Activated naive CD4-positive, alpha-beta T cell treated with anti-CD3 and anti-CD28 coated beads, Interleukin-2, amount 10 ng/mL, durations not matched to agents 7 days and 5 days (primary cell): ENCODE measurements at regions of chr3 and their contacts with region 1.

Region 1: GRCh38 chr3:129016356-129016719 is 15.2 kb downstream of the EFCC1 start:
- DNase-seq: peak; percentile 77
- H3K4me3 Mint-ChIP-seq: peak overlapping the region; percentile 64
- H3K27ac Mint-ChIP-seq: peak overlapping the region; percentile 93
- H3K4me1 Mint-ChIP-seq: peaks cover 47% of the 10 kb centered on the region
- H3K27me3 Mint-ChIP-seq: peaks cover 3% of the 10 kb centered on the region

Region 2: DNA sequence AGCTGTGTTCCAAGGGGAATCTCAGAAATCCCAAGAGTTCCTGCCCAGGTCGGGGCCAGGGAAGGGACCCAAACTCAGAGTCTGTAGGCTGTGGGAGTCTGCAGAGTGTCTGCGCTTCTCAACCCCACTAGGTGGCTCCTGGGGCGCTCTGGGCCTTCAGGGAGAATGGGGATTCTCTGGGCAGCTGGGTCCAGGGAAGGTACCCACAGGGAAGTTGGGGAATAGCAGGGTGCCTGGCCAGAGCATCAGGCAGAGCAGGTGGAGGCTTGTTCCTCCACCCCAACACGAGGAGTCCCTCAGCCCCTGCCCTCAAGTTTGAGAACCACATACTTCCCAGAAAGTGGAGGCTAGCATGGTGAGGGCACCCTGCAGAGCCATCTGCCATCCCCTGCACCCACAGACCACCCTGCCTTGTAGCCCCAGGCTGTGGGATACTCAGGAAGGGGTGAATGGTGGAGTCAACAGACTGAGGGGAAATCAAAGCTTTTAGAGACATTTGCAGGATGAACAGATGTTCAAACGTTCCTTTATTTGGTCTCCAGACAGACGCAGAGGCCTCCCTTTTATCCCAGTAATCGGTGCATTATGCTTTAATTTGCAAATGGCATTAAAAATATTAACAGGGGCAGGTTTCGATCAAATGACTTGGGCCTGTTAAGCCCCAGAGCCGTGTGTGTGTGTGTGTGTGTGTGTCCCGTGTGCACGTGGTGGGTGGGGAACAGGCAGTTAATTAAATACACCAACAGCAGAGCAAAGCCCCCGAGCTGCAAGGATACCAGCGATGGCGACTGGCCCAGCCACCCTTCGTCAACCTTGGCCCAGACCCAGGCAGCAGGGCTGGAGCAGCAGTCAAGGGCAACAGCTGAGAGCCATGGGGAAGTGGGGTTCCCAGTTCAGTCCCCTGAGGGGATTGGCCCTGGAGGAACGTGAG is 607.4 kb before region 1 on chr3:
- CTCF ChIA-PET with region 1: no interaction called
- DNase-seq: no peak
- H3K4me3 Mint-ChIP-seq: no peak overlapping the region
- H3K27ac Mint-ChIP-seq: no peak overlapping the region
- H3K4me1 Mint-ChIP-seq: no peaks in the 10 kb centered on the region
- H3K27me3 Mint-ChIP-seq: no peaks in the 10 kb centered on the region

Region 3: DNA sequence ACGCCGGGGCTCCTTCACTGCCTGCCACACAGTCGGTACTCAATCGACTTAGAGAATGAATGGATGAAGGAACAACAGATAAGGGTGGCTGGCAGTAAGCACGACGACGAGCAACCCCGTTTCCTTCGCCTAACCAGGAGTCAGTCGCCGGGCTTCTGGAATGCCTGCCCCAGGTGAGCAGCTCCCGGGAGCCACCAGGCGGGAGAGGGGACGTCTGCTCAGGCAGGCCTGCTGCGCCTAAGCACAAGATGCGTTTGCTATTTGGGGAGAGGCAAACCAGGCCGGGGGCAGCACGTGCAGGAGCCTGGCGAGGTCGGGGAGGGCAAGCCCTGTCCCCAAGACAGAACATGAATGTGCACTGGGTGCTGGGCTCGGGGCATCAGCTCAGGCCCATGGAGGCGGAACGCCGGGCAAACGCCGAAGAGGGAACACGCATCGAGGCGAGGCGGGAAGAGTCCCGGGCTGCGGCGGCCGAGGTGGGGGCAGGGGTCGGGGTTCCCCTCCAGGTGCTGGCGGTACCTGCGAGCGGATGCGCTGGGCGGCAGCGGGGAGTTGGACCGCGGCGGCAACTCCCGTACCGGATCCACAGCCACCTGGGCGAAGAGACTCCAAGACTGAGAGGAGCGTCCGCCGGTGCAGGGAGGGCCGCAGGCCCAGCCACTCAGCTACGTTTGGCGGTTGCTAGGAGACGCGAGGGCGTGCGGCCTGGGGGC is 22.7 kb before region 1 on chr3 and contains the start of gene CFAP92:
- CTCF ChIA-PET with region 1: interaction called, 18 read pairs
- DNase-seq: peak; percentile 96
- H3K4me3 Mint-ChIP-seq: peak within 1 kb of the TSS; percentile 62
- H3K27ac Mint-ChIP-seq: no peak within 1 kb of the TSS
- H3K4me1 Mint-ChIP-seq: peaks cover 31% of the 10 kb centered on the region
- H3K27me3 Mint-ChIP-seq: peaks cover 38% of the 10 kb centered on the region

Region 4: GRCh38 chr3:129003578-129004160 is 12.7 kb before region 1 on chr3:
- CTCF ChIA-PET with region 1: interaction called, 24 read pairs
- DNase-seq: peak; percentile 72
- H3K4me3 Mint-ChIP-seq: no peak overlapping the region
- H3K27ac Mint-ChIP-seq: no peak overlapping the region
- H3K4me1 Mint-ChIP-seq: peaks cover 54% of the 10 kb centered on the region
- H3K27me3 Mint-ChIP-seq: peaks cover 81% of the 10 kb centered on the region

Region 5: GRCh38 chr3:129026728-129027543 is 10.6 kb after region 1 on chr3:
- CTCF ChIA-PET with region 1: interaction called, 47 read pairs
- DNase-seq: peak; percentile 96
- H3K4me3 Mint-ChIP-seq: peak overlapping the region; percentile 72
- H3K27ac Mint-ChIP-seq: peak overlapping the region; percentile 85
- H3K4me1 Mint-ChIP-seq: peaks cover 27% of the 10 kb centered on the region
- H3K27me3 Mint-ChIP-seq: peaks cover 38% of the 10 kb centered on the region

Region 6: DNA sequence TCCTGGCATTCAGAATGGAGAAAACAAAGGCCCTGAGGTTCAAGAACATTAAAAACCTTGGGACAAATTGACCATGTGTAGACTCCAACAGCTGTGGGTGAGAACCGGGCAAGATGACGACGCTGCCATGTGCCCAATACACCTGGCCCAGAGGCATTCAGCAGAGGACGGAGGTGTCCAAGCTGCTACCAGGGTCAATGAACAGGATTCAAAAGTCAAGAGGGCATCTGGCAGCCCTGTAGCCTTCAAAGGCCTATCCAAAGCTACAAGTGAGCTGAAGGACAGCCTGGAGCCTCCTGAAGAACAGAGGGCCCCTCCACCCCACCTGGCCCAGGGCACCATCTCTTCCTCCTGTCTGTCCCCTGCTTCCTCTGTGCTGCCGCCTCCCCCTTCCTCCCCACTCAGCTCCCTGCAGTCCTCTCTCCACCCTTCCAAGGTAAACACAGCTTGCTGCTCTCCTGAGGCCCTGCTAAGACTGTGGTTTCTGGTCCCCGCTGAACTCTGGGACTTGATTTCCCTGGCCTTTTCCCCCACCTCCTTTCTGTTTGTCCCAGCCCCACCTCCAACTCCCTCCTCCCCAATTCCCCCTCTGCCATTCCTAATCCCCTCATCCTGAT is 319.9 kb after region 1 on chr3:
- CTCF ChIA-PET with region 1: no interaction called
- DNase-seq: no peak
- H3K4me3 Mint-ChIP-seq: no peak overlapping the region
- H3K27ac Mint-ChIP-seq: no peak overlapping the region
- H3K4me1 Mint-ChIP-seq: no peaks in the 10 kb centered on the region
- H3K27me3 Mint-ChIP-seq: peaks cover 42% of the 10 kb centered on the region